Body of pancreas (tissue), 4 donors: ENCODE measurements at regions of chr12 and their contacts with region 1.

Region 1: GRCh38 chr12:53213348-53213747 is 6.3 kb upstream of the ITGB7 start:
- DNase-seq: peak; percentile 83 to 87 (median 84)
- ATAC-seq: peak; percentile 77
- H3K4me3 ChIP-seq: no peak overlapping the region
- H3K27ac ChIP-seq: no peak overlapping the region
- H3K4me1 ChIP-seq: peaks cover 21% of the 10 kb centered on the region
- H3K27me3 ChIP-seq: no peaks in the 10 kb centered on the region
- CTCF ChIP-seq: peak; percentile 89 to 96 (median 94)
- POLR2A ChIP-seq: no peak

Region 2: DNA sequence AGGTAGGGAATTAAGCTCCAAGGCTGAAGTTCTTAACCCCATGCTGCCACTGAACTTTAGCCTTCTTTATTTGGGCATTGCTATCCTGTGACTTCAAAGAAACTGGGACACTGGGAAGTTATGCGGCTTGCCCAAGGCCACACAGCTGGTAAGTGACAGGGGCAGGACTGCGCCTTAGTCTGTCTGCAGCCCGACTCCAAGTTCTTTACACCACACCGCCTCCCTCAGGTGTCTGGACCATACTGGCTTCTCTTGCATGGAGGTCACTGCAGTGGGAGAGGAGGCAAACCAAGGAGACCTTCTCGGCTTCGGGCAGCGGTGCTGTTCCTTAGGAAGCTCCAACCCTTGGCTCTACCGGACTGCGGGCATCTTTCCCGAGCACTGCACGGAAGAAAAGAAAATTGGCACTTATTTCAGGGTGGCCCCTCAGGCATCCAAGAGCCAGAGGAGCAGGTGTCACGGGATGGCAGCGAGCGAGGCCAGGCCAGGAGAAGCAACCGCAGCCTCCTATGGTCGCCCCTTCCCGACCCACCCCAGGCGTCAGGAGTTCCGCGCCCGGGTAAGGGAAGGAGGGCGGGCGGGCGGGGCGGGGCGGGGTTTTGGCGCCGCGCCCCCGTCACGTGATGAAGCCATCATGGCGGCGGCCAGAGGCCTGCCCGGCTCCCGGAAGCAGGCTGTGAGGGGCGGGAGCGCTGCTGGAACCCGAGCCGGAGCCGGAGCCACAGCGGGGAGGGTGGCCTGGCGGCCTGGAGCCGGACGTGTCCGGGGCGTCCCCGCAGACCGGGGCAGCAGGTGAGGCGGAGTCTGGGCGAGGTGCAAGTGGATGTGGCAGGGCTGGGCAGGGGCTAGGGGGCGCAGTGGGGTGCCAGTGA is 38.4 kb after region 1 on chr12:
- intact Hi-C with region 1: loop called (anchors 5 kb)
- DNase-seq: peak; percentile 79 to 89 (median 86)
- ATAC-seq: peak; percentile 88
- H3K4me3 ChIP-seq: peak overlapping the region; percentile 80 to 89
- H3K27ac ChIP-seq: peak overlapping the region; percentile 80 to 93 (median 90)
- H3K4me1 ChIP-seq: peaks cover 33% of the 10 kb centered on the region
- H3K27me3 ChIP-seq: no peaks in the 10 kb centered on the region
- CTCF ChIP-seq: peak in 6 of 7 experiments; percentile 6 to 57 (median 56)
- POLR2A ChIP-seq: peak in 2 of 3 donors; percentile 63 to 64

Region 3: GRCh38 chr12:53287741-53288216 is 74.4 kb after region 1 on chr12:
- intact Hi-C with region 1: loop called (anchors 5 kb)
- DNase-seq: peak; percentile 72 to 81 (median 76)
- ATAC-seq: peak; percentile 75
- H3K4me3 ChIP-seq: no peak overlapping the region
- H3K27ac ChIP-seq: no peak overlapping the region
- H3K4me1 ChIP-seq: no peaks in the 10 kb centered on the region
- H3K27me3 ChIP-seq: no peaks in the 10 kb centered on the region
- CTCF ChIP-seq: peak; percentile 37 to 78 (median 74)
- POLR2A ChIP-seq: no peak